WTC11 (cell line): ENCODE measurements at regions of chr14 and their contacts with region 1.

Region 1: GRCh38 chr14:62168564-62169155 is 406.4 kb downstream of the SNAPC1 start:
- DNase-seq: no peak
- ATAC-seq: peak; percentile 62
- H3K4me3 Mint-ChIP-seq: no peak overlapping the region
- H3K27ac Mint-ChIP-seq: no peak overlapping the region
- H3K4me1 Mint-ChIP-seq: peaks cover 7% of the 10 kb centered on the region
- H3K27me3 Mint-ChIP-seq: no peaks in the 10 kb centered on the region; the same call in 1 of the 2 replicates
- CTCF ChIP-seq: no peak

Region 2: DNA sequence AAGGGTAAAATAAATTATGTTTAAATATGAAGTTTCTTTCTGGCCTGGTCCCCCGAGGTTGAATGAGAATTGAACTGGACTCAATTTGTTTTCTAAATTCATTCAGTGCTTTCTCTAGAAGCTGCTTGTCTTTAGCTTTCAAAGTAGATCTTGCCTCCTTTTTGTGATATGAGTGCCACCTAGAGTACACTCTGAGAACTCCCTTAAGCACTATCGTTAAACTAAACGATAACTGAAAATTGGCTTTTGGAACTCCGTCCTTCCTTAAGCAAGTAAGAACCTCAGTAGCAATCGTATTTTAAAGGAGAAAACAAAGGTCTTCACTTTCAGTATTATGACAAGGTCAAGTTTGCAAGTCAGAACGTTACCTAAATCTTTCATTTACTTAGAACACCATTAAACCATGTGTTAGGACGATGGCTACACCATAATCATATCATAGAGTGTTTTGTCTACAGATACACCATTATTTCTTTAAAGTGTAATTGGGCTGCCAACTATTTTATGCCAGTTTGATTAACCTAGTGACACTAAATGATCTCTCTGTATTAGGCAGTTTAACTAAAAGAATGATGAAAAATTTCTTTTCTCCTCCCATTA is 41.7 kb before region 1 on chr14:
- CTCF ChIA-PET with region 1: no interaction called
- POLR2A ChIA-PET with region 1: no interaction called
- DNase-seq: no peak
- ATAC-seq: peak; percentile 80
- H3K4me3 Mint-ChIP-seq: no peak overlapping the region
- H3K27ac Mint-ChIP-seq: no peak overlapping the region
- H3K4me1 Mint-ChIP-seq: peaks cover 15% of the 10 kb centered on the region
- H3K27me3 Mint-ChIP-seq: no peaks in the 10 kb centered on the region
- CTCF ChIP-seq: peak; percentile 23; the same call in 1 of the 2 replicates

Region 3: GRCh38 chr14:62156052-62156451 is 12.6 kb before region 1 on chr14:
- CTCF ChIA-PET with region 1: no interaction called
- POLR2A ChIA-PET with region 1: no interaction called
- DNase-seq: no peak
- ATAC-seq: no peak
- H3K4me3 Mint-ChIP-seq: no peak overlapping the region
- H3K27ac Mint-ChIP-seq: no peak overlapping the region
- H3K4me1 Mint-ChIP-seq: no peaks in the 10 kb centered on the region
- H3K27me3 Mint-ChIP-seq: no peaks in the 10 kb centered on the region
- CTCF ChIP-seq: no peak

Region 4: GRCh38 chr14:62179367-62180018 is 10.8 kb after region 1 on chr14:
- CTCF ChIA-PET with region 1: interaction called, 14 read pairs
- POLR2A ChIA-PET with region 1: no interaction called
- DNase-seq: peak; percentile 73
- ATAC-seq: peak; percentile 81
- H3K4me3 Mint-ChIP-seq: no peak overlapping the region
- H3K27ac Mint-ChIP-seq: no peak overlapping the region
- H3K4me1 Mint-ChIP-seq: peaks cover 3% of the 10 kb centered on the region
- H3K27me3 Mint-ChIP-seq: no peaks in the 10 kb centered on the region; the same call in 1 of the 2 replicates
- CTCF ChIP-seq: peak; percentile 49

Region 5: GRCh38 chr14:62209287-62209899 is 40.7 kb after region 1 on chr14:
- CTCF ChIA-PET with region 1: no interaction called
- POLR2A ChIA-PET with region 1: no interaction called
- DNase-seq: no peak
- ATAC-seq: no peak
- H3K4me3 Mint-ChIP-seq: no peak overlapping the region
- H3K27ac Mint-ChIP-seq: no peak overlapping the region
- H3K4me1 Mint-ChIP-seq: no peaks in the 10 kb centered on the region
- H3K27me3 Mint-ChIP-seq: peaks cover 5% of the 10 kb centered on the region; the same call in 1 of the 2 replicates
- CTCF ChIP-seq: no peak

Region 6: DNA sequence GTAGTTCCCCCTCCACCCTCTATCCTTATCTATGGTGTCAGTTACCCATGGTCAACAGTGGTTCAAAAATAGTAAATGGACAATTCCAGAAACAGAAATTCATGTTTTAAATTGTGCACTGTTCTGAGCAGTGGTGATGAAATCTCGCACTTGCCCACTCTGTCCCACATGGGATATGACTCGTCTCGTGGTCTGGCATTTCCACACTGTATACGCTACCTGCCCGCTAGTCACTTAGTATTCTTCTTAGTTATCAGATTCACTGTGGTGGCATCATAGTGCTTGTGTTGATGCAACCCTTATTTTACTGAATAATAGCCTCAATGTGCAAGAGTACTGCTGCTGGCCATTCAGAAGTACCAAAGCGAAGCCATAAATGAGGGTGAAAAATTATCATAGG is 100.5 kb after region 1 on chr14:
- CTCF ChIA-PET with region 1: no interaction called
- POLR2A ChIA-PET with region 1: no interaction called
- DNase-seq: no peak
- ATAC-seq: no peak
- H3K4me3 Mint-ChIP-seq: no peak overlapping the region
- H3K27ac Mint-ChIP-seq: no peak overlapping the region
- H3K4me1 Mint-ChIP-seq: no peaks in the 10 kb centered on the region
- H3K27me3 Mint-ChIP-seq: no peaks in the 10 kb centered on the region
- CTCF ChIP-seq: no peak

Region 7: GRCh38 chr14:63276492-63277342 is 1108.1 kb after region 1 on chr14:
- CTCF ChIA-PET with region 1: interaction called, 11 read pairs
- POLR2A ChIA-PET with region 1: no interaction called
- DNase-seq: no peak
- ATAC-seq: peak; percentile 70
- H3K4me3 Mint-ChIP-seq: no peak overlapping the region
- H3K27ac Mint-ChIP-seq: no peak overlapping the region
- H3K4me1 Mint-ChIP-seq: no peaks in the 10 kb centered on the region
- H3K27me3 Mint-ChIP-seq: no peaks in the 10 kb centered on the region
- CTCF ChIP-seq: peak; percentile 77

Region 8: GRCh38 chr14:63308723-63309317 is 1140.2 kb after region 1 on chr14:
- CTCF ChIA-PET with region 1: interaction called, 11 read pairs
- POLR2A ChIA-PET with region 1: no interaction called
- DNase-seq: peak; percentile 62
- ATAC-seq: peak; percentile 83
- H3K4me3 Mint-ChIP-seq: no peak overlapping the region
- H3K27ac Mint-ChIP-seq: no peak overlapping the region
- H3K4me1 Mint-ChIP-seq: peaks cover 11% of the 10 kb centered on the region
- H3K27me3 Mint-ChIP-seq: no peaks in the 10 kb centered on the region
- CTCF ChIP-seq: peak; percentile 32; the same call in 1 of the 2 replicates